AG04450 (cell line): ENCODE measurements at regions of chr4 and their contacts with region 1.

Region 1: GRCh38 chr4:153127760-153128494 is 76.3 kb upstream of the TRIM2 start:
- DNase-seq: peak; percentile 65
- H3K4me3 ChIP-seq: no peak overlapping the region
- H3K27ac ChIP-seq: no peak overlapping the region
- H3K27me3 ChIP-seq: no peaks in the 10 kb centered on the region
- CTCF ChIP-seq: peak; percentile 84

Region 2: DNA sequence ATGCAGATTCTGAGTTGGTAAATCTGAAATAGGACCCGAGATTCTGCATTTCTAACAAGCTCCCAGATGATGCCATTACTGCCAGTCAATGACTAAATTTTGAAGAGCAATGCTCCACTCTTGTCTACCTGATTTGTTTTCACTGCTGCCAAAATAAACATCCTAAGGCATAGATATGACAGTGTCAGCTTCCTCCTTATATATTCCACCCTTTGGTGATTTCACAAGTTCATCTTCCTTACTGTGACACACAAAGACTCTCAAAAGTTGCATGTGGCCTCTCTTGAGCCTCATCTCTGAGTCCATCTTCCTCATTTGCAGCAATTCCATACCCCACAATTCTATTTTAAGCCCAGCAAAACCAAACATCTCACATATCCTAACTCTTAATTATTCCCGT is 703.0 kb before region 1 on chr4:
- CTCF ChIA-PET with region 1: no interaction called
- POLR2A ChIA-PET with region 1: no interaction called
- DNase-seq: no peak
- H3K4me3 ChIP-seq: no peak overlapping the region
- H3K27ac ChIP-seq: no peak overlapping the region
- H3K27me3 ChIP-seq: no peaks in the 10 kb centered on the region
- CTCF ChIP-seq: no peak

Region 3: GRCh38 chr4:152663203-152664066 is 464.5 kb before region 1 on chr4:
- CTCF ChIA-PET with region 1: no interaction called
- POLR2A ChIA-PET with region 1: no interaction called
- DNase-seq: no peak
- H3K4me3 ChIP-seq: no peak overlapping the region
- H3K27ac ChIP-seq: no peak overlapping the region
- H3K27me3 ChIP-seq: peaks cover 9% of the 10 kb centered on the region
- CTCF ChIP-seq: no peak

Region 4: DNA sequence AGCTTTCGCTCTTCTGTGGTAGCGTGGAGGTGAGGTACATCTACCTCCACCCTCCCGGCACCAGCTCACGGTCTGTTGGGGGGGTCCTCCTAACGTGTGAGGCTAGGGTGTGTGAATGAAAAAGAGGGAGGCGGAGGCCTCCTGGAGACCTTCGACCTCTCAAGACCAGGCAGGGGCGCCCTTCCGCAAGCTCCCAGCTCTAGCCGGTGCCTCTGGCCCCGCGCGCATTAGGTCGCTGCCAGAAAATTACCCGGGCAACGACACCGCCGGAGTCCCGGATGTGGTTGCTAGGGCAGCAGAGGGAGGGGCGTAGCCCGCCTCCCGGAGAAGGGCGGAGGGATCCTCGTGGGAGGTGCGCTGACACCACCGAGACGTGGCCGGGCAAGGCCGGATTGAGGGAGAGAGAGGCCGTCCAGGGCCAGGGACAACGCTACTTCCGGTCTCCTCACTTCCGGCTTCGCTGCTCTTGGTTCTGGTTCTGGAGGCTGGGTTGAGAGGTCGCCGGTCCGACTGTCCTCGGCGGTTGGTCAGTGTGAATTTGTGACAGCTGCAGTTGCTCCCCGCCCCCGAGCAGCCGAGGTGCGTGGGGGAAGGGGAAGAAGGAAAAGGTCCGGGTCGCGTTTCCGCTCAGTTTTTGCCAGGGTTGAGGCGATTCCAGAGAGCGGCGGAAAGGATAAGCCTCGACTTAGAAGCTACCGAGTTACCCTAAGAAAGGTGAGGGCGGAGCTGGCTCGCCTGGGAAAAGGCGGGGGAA is 348.2 kb before region 1 on chr4 and contains the starts of genes ARFIP1 and TIGD4:
- CTCF ChIA-PET with region 1: interaction called, 22 read pairs
- POLR2A ChIA-PET with region 1: no interaction called
- DNase-seq: peak; percentile 91
- H3K4me3 ChIP-seq: peak within 1 kb of the TSS; percentile 68
- H3K27ac ChIP-seq: peak within 1 kb of the TSS; percentile 83
- H3K27me3 ChIP-seq: peaks cover 6% of the 10 kb centered on the region
- CTCF ChIP-seq: peak; percentile 23; the same call in 1 of the 2 replicates
- polyA plus RNA-seq, gene ARFIP1: 29.1 and 42.0 TPM in 2 replicates
- polyA plus RNA-seq, gene TIGD4: not detected in 2 replicates

Region 5: GRCh38 chr4:152896811-152897210 is 231.1 kb before region 1 on chr4:
- CTCF ChIA-PET with region 1: interaction called, 11 read pairs
- POLR2A ChIA-PET with region 1: no interaction called
- DNase-seq: peak; percentile 18
- H3K4me3 ChIP-seq: no peak overlapping the region
- H3K27ac ChIP-seq: no peak overlapping the region
- H3K27me3 ChIP-seq: no peaks in the 10 kb centered on the region
- CTCF ChIP-seq: no peak

Region 6: GRCh38 chr4:153089742-153090141 is 38.2 kb before region 1 on chr4:
- CTCF ChIA-PET with region 1: interaction called, 224 read pairs
- POLR2A ChIA-PET with region 1: no interaction called
- DNase-seq: no peak
- H3K4me3 ChIP-seq: no peak overlapping the region
- H3K27ac ChIP-seq: no peak overlapping the region
- H3K27me3 ChIP-seq: peaks cover 14% of the 10 kb centered on the region
- CTCF ChIP-seq: no peak

Region 7: DNA sequence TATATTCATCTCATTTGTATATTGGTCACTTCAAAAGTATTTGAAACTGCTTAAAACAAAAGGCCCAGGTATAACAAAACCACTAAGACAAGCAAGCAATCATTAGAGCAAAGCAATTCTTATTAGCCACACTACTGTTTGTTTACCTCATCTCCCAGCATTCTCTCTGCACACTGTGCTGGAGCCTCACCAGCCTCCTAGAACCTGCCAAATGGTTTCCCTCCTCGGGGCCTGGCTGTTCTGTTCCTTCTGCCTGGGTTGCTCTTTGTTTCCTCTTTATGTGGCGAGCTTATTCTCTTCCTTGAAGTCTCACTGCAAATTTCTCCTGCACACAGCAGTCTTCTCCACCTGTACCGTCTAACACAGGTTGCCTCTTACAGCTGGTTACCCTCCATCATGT is 149.0 kb after region 1 on chr4:
- CTCF ChIA-PET with region 1: no interaction called
- POLR2A ChIA-PET with region 1: no interaction called
- DNase-seq: no peak
- H3K4me3 ChIP-seq: no peak overlapping the region
- H3K27ac ChIP-seq: no peak overlapping the region
- H3K27me3 ChIP-seq: no peaks in the 10 kb centered on the region
- CTCF ChIP-seq: no peak

Region 8: GRCh38 chr4:153318696-153319320 is 190.9 kb after region 1 on chr4:
- CTCF ChIA-PET with region 1: interaction called, 13 read pairs
- POLR2A ChIA-PET with region 1: no interaction called
- DNase-seq: no peak
- H3K4me3 ChIP-seq: no peak overlapping the region
- H3K27ac ChIP-seq: no peak overlapping the region
- H3K27me3 ChIP-seq: no peaks in the 10 kb centered on the region
- CTCF ChIP-seq: peak; percentile 86

Region 9: DNA sequence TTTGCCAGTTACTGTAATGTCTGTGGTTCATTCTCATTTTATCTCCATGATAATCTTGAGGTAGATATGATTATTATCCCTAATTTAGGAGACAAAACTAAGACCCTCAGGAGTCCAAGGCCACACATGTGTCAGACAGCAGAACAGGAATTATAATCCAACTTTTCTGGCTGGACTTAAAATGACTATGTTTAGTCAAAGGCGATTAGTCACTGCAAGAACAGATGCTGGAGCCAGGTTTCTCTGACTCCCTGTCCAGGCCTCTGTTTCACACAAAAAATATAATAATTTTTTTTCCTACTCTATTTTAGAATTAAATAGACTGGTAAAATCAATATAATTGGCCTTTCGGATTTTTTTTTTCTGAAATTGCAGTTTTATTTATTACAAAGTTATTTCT is 281.5 kb after region 1 on chr4:
- CTCF ChIA-PET with region 1: no interaction called
- POLR2A ChIA-PET with region 1: no interaction called
- DNase-seq: peak; percentile 34
- H3K4me3 ChIP-seq: no peak overlapping the region
- H3K27ac ChIP-seq: no peak overlapping the region
- H3K27me3 ChIP-seq: no peaks in the 10 kb centered on the region
- CTCF ChIP-seq: no peak